ENCODE measurements at regions of chr22 and their contacts with region 1.

Region 1: DNA sequence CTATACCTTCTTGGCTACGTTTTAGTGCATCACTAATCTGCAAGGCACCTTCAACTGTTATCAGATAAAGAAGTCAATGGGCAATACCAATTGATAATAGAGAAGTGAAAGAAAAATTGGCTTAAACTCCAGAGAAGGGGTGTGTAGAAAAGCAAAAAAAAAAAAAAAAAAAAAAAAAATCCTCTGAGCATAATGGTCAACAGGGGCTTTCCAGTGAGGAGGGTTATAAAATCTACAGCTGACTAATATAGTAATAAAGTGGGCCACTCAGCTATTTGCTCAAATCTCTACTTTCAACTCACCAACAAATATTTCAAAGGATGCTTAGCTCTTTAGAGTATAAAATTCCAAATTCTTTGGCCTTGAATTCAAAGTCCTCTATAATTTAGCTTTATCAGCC is 77.8 kb downstream of the APOL5 start:
- DNase-seq: no peak
- H3K4me3 ChIP-seq: no peak overlapping the region
- H3K27me3 ChIP-seq: no peaks in the 10 kb centered on the region
- CTCF ChIP-seq: no peak

Region 2: GRCh38 chr22:35678836-35679235 is 116.6 kb before region 1 on chr22:
- CTCF ChIA-PET with region 1: no interaction called
- POLR2A ChIA-PET with region 1: no interaction called
- DNase-seq: no peak
- H3K4me3 ChIP-seq: no peak overlapping the region
- H3K27me3 ChIP-seq: no peaks in the 10 kb centered on the region; the same call in 1 of the 2 replicates
- CTCF ChIP-seq: no peak

Region 3: GRCh38 chr22:35777335-35777975 is 18.0 kb before region 1 on chr22:
- CTCF ChIA-PET with region 1: interaction called, 4 read pairs
- POLR2A ChIA-PET with region 1: interaction called, 13 read pairs
- DNase-seq: no peak
- H3K4me3 ChIP-seq: no peak overlapping the region
- H3K27me3 ChIP-seq: no peaks in the 10 kb centered on the region
- CTCF ChIP-seq: no peak

Region 4: GRCh38 chr22:36052505-36053270 is 257.2 kb after region 1 on chr22:
- CTCF ChIA-PET with region 1: no interaction called
- POLR2A ChIA-PET with region 1: interaction called, 10 read pairs
- DNase-seq: no peak
- H3K4me3 ChIP-seq: no peak overlapping the region
- H3K27me3 ChIP-seq: no peaks in the 10 kb centered on the region
- CTCF ChIP-seq: no peak

Measured in BJ (cell line).